OCI-LY7 (cell line): ENCODE measurements at regions of chr9 and their contacts with region 1.

Region 1: DNA sequence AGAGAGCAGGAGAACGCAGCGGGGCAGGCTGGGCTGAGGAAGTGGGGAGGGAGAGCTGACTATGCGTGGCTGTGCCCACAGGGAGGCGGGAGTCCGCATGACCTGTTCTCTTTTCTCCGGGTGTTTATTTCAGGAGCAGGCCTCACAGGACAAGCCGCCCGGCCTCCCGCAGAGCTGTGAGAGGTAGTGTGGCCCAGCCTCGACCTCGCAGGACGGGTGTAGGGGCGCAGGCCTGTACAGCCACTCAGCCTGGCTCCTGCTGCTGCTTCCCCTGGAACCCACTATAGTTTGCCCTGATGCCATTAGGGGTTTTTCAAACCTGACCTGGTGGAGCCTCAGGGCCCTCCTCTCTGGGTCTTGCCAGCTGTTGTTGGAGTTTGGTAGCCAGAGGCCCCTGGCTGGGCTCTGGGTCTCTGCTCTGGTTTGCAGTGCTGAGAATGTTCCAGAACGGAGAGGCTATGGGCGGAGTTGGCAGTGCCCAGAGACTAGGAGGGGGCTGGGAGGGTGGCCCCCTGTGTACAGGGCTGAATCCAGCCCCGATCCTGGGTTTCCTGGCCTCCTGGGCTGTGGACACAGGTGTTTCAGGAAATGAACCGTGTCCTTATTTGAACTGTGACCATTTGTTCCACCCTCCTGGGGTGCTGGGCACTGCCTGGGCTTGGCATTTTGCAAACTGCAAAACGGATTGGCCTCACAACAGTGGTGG is 78.8 kb downstream of the WNK2 start:
- DNase-seq: no peak
- H3K4me3 ChIP-seq: no peak overlapping the region
- H3K27ac ChIP-seq: peak overlapping the region; percentile 64
- H3K4me1 ChIP-seq: peaks cover 69% of the 10 kb centered on the region
- CTCF ChIP-seq: no peak

Region 2: DNA sequence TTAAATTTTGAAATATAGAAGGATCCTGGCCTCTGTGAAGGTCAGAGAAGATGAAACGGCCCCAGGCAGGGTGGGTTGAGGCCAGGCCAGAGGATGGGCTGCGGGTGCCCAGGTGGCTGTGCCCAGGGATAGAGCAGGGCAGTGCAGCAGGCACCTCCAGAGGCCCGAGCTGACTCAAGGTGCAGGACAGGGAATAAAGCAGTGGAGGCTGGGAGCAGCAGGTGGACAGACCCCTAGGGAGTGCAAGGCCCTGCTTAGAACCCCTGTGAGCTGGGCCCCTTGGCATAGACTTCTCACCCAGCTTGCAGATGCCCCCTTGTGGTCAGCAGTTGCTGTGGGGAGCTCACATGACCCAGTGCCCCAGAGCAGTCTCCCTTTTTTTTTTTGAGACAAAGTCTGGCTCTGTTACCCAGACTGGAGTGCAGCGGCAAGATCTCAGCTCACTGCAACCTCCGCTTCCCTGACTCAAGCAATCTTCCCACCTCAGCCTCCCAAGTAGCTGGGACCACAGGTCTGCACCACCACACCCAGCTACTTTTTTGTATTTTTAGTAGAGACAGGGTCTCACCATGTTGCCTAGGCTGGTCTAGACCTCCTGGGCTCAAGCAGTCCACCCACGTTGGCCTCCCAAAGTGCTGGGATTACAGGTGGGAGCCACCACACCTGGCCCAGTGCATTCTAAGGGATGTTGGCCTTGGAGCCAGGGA is 40.0 kb after region 1 on chr9:
- CTCF ChIA-PET with region 1: interaction called, 15 read pairs
- POLR2A ChIA-PET with region 1: interaction called, 6 read pairs
- intact Hi-C with region 1: loop called (anchors 1 kb)
- DNase-seq: peak; percentile 86
- H3K4me3 ChIP-seq: no peak overlapping the region
- H3K27ac ChIP-seq: peak overlapping the region; percentile 61
- H3K4me1 ChIP-seq: peaks cover 52% of the 10 kb centered on the region
- CTCF ChIP-seq: peak; percentile 79

Region 3: DNA sequence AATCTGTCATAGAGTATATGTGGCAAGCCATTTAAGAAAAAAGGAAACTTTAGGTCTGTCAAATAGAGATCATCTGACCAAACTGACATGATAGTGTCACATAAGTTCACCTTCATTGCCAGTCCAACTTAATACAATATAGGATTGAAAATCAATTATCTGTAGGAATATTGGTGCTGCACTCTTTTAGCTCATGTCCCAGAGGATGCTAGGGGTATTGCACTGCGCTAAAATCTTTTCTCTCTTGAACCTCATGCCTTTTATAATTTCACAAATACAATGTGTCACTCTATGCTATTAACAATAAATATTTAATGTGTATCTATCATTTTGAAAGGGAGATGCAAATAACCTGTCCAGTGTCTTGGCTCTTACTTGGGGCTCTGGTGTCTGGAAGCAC is 116.4 kb after region 1 on chr9:
- CTCF ChIA-PET with region 1: no interaction called
- POLR2A ChIA-PET with region 1: no interaction called
- intact Hi-C with region 1: no loop called
- DNase-seq: no peak
- H3K4me3 ChIP-seq: no peak overlapping the region
- H3K27ac ChIP-seq: no peak overlapping the region
- H3K4me1 ChIP-seq: no peaks in the 10 kb centered on the region
- CTCF ChIP-seq: peak; percentile 49; the same call in 1 of the 2 replicates